MCF 10A (cell line): ENCODE measurements at regions of chr16 and their contacts with region 1.

Region 1: GRCh38 chr16:89700100-89700648 is 1.3 kb downstream of the SPATA2L start:
- DNase-seq: peak; percentile 99
- H3K4me3 Mint-ChIP-seq: peak overlapping the region; percentile 71
- H3K27ac Mint-ChIP-seq: no peak overlapping the region
- H3K4me1 Mint-ChIP-seq: no peaks in the 10 kb centered on the region
- H3K27me3 Mint-ChIP-seq: no peaks in the 10 kb centered on the region
- CTCF ChIP-seq: peak; percentile 82

Region 2: DNA sequence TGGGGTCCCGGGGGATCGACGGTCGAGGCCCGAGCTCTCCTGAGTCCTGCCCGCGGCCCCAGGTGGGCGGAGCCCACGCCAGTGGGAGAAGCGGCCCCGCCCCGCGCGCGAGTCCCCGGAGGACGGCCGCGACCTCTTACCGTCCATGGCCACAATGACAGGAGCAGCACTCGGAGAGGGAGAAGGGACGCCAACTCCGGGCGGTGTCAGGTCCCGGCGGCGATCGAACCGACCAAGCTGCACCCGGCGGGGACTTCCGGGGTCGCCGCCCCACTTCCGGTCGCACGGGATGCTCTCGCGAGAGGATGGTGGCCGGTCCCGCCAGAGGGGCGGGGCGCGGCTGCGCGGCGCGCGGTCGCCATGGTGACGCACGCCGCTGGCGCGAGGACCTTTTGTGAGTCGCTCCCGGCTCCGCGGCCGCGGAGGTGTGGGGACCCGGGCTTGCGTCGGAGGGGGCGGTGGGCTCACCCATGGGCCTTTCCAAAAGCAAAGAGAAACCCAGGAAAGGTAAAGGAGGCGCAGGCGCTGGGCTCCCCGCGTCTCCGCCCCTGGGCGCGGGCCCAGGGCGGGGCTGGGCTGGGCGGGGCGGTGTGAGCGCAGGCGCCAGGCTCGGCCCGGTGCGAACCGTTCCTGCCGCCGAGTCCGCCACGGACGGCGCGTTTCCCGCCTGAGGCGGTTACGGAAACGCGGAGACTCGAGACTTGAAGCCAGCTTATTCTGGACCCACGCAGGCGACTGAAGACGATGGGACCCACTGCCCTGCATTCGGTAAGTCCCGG is 42.5 kb before region 1 on chr16 and contains the starts of genes CHMP1A and SPATA33:
- CTCF ChIA-PET with region 1: interaction called, 4 read pairs
- POLR2A ChIA-PET with region 1: interaction called, 25 read pairs
- intact Hi-C with region 1: no loop called
- DNase-seq: peak; percentile 84
- H3K4me3 Mint-ChIP-seq: peak within 1 kb of the TSS; percentile 89
- H3K27ac Mint-ChIP-seq: peak within 1 kb of the TSS; percentile 85
- H3K4me1 Mint-ChIP-seq: peaks cover 7% of the 10 kb centered on the region
- H3K27me3 Mint-ChIP-seq: no peaks in the 10 kb centered on the region
- CTCF ChIP-seq: no peak
- total RNA-seq, gene CHMP1A: 59.7 and 62.4 TPM in 2 replicates
- total RNA-seq, gene SPATA33: 7.2 and 9.5 TPM in 2 replicates

Region 3: DNA sequence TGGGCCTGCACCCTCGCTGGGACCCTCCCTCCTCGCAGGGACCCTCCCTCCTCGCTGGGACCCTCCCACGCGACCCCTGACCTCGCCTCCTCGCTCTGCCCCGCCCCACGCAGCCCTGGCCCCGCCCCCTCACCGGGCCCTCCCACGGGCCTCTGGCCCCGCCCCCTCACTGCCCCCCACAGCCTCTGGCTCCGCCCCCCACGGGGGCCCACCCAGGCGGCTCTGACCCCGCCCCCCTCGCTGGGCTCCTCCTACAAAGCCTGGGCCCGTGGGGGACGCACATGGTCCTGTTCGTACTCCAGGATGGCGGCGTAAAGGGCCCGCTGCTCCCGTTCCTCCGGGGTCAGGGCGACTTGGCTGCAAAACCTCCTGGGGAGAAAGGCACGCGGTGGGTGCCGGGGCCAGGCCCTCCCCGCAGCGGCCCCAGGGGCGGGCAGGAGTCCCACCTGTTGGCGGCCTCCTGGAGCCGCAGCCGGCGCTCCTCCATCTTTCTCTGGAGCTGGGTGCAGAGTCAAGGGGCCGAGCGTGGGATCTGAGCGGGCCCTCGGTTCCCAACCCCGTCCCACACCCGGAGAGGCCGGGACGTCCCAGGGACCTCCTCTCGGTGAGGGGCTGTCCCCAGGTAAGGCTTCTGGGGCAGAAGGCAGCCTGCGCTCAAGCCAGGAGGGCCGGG is 11.6 kb after region 1 on chr16:
- CTCF ChIA-PET with region 1: interaction called, 7 read pairs
- POLR2A ChIA-PET with region 1: interaction called, 23 read pairs
- intact Hi-C with region 1: no loop called
- DNase-seq: peak; percentile 83
- H3K4me3 Mint-ChIP-seq: peak overlapping the region; percentile 75
- H3K27ac Mint-ChIP-seq: peak overlapping the region; percentile 19
- H3K4me1 Mint-ChIP-seq: no peaks in the 10 kb centered on the region
- H3K27me3 Mint-ChIP-seq: no peaks in the 10 kb centered on the region
- CTCF ChIP-seq: no peak

Region 4: DNA sequence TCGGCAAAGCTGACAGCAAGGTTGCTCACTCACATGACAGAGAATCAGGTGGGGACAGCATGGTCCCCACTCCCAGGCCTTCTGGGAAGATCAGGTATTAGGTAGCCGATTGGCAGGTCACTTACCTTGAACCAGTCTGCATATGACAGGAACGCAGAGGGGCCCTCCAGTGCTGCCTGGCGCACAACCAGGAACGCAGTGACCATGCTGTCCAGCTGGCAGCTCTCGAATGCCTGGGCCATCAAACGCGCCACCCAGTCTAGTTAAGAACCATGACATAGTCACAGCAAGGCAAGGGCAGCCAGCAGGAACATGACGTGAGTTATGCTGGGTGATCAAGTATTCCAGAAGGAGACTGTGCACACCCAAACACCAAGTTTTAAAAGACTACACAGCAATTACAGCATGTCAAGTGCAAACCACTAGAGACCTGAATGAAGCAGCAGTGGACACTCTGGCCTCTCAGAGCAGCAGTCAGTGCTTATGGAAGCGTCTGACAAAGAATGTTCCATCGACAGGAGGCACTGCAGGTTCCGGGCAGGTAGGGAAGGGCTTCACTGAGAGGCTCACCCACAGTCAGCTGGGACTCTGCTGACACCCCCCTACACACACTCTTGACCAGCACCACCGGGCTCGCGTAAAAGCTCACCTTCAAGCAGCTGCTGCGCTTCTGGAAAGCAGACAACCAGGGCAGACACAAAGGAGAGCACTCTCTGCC is 91.3 kb after region 1 on chr16:
- CTCF ChIA-PET with region 1: interaction called, 20 read pairs
- POLR2A ChIA-PET with region 1: no interaction called
- intact Hi-C with region 1: loop called (anchors 2 kb)
- DNase-seq: no peak
- H3K4me3 Mint-ChIP-seq: no peak overlapping the region
- H3K27ac Mint-ChIP-seq: peak overlapping the region; percentile 11
- H3K4me1 Mint-ChIP-seq: no peaks in the 10 kb centered on the region
- H3K27me3 Mint-ChIP-seq: no peaks in the 10 kb centered on the region
- CTCF ChIP-seq: no peak

Region 5: DNA sequence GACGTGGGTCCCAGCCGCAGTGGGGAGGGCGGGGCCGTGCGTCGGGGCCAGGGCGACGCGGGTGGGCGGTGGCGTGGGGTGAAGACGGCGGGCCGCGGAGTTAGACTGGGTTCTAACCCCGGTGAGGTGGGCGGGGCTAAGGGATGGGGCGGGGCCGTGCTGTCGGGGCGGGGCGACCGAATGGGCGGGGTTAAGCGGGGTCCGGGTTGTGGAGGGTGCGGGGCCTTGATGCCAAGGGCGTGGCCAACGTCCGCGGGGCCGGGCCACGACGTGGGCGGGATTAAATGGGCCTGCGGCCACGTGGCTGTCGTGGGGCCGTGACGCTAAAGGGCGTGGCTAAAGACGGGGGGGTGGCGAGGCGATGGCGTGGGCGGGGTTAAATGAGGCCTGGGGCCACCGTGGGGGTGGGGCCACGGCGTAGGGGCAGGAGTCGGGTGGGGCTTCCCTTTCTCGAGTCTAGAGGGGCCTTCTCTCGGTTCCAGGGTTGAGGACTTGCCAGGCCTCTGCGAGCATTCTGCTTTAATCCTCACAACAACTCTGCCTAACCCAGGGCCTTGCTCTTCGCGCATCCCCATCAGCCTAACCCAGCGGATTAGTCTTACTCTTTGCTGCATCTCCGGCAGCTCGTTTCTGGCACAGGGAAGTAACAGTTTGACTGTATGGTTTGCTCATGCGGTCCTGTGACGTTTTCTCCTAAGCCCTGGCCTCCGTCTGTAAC is 174.0 kb after region 1 on chr16:
- CTCF ChIA-PET with region 1: no interaction called
- POLR2A ChIA-PET with region 1: interaction called, 12 read pairs
- intact Hi-C with region 1: no loop called
- DNase-seq: peak; percentile 92
- H3K4me3 Mint-ChIP-seq: peak overlapping the region; percentile 89
- H3K27ac Mint-ChIP-seq: peak overlapping the region; percentile 99
- H3K4me1 Mint-ChIP-seq: peaks cover 11% of the 10 kb centered on the region
- H3K27me3 Mint-ChIP-seq: no peaks in the 10 kb centered on the region
- CTCF ChIP-seq: no peak

Region 6: DNA sequence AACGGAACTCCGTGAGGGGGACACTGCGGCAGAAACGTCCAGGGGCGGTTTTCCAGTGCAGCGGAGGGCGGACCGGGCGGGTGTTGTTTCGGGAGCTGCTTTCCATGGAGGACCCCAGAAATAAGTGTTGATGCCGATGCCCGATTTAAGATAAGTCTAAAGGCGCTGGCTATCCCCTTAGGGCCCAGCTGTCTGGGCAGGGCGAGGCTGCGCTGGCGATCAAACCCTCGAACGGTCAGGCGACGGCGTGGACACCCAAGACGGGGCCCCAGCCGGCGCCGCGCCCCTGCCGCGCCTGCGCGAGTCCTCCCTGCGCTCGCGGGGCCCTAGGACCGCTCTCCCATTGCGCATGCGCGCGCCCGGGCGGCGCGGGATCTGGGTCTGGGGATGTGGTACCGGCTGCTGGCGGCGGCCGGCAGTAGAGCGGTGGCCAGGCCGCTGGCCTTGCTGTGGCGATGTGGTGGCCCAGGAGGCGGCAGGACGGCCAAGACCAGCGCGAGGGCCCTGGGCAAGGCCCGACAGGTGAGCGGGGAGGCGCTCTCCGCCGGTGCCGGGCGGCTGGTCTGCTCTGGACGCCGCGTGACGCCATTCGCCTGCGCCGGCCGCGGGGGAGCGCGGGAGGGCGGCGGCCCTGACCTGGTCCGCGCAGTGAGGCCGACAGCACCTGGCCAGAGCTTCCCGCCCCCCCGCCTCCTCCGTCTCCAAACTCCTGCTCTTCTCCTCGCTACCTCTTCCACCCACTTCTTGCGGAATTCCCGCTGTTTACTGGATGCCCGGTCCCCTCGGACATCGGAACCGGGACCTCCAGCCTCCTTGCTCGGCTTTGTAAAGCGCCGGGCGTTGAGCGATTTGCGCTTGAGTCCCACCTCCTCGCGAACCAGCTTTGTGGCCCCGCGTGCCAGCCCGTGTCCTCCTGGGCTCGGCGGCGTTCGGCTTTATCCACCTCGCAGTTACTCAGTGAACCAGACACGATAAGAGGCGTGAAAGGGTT is 272.4 kb after region 1 on chr16:
- CTCF ChIA-PET with region 1: interaction called, 10 read pairs
- POLR2A ChIA-PET with region 1: interaction called, 3 read pairs
- intact Hi-C with region 1: no loop called
- DNase-seq: peak; percentile 95
- H3K4me3 Mint-ChIP-seq: peak overlapping the region; percentile 89
- H3K27ac Mint-ChIP-seq: peak overlapping the region; percentile 57
- H3K4me1 Mint-ChIP-seq: peaks cover 12% of the 10 kb centered on the region
- H3K27me3 Mint-ChIP-seq: no peaks in the 10 kb centered on the region
- CTCF ChIP-seq: no peak